ENCODE measurements at regions of chr16 and their contacts with region 1.

Region 1: GRCh38 chr16:81366316-81366932 is 51.7 kb downstream of the GAN start:
- DNase-seq: peak; percentile 36
- H3K4me3 Mint-ChIP-seq: no peak overlapping the region
- H3K27ac Mint-ChIP-seq: no peak overlapping the region
- H3K4me1 Mint-ChIP-seq: no peaks in the 10 kb centered on the region
- H3K27me3 Mint-ChIP-seq: no peaks in the 10 kb centered on the region
- CTCF ChIP-seq: peak; percentile 63

Region 2: DNA sequence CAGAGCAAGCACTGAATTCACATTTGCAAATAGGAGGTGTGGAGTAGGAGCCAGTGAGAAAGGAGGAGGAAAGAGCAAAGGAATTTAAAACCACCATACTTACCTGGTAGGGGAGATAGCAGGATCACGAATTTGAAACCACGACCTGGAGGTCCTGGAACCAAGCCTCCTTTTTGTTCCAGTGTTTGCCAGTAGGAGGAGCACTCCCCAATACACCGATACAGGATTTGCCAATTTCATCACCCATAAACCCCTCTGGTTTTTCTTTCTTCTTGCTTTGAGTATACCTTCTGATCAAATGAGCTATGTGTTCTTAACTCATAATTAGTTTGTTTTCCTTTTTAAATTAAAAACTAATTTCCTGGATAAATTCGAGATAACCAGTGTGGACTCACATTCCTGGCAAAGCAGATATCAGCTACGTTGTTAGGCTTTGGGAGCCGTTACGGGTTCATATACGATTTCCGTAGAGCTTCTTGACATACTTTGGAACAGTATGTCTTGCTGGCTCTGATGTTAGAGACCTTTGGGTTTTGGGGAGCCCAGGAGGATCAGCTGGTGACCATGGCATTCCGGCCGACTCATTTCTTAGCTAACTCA is 105.3 kb before region 1 on chr16:
- CTCF ChIA-PET with region 1: no interaction called
- intact Hi-C with region 1: loop called (anchors 10 kb)
- DNase-seq: peak; percentile 58
- H3K4me3 Mint-ChIP-seq: no peak overlapping the region
- H3K27ac Mint-ChIP-seq: no peak overlapping the region
- H3K4me1 Mint-ChIP-seq: peaks cover under 1% of the 10 kb centered on the region
- H3K27me3 Mint-ChIP-seq: no peaks in the 10 kb centered on the region
- CTCF ChIP-seq: peak; percentile 81

Region 3: GRCh38 chr16:81376880-81377279 is 10.5 kb after region 1 on chr16:
- CTCF ChIA-PET with region 1: no interaction called
- intact Hi-C with region 1: no loop called
- DNase-seq: peak; percentile 59
- H3K4me3 Mint-ChIP-seq: no peak overlapping the region
- H3K27ac Mint-ChIP-seq: no peak overlapping the region
- H3K4me1 Mint-ChIP-seq: no peaks in the 10 kb centered on the region
- H3K27me3 Mint-ChIP-seq: no peaks in the 10 kb centered on the region
- CTCF ChIP-seq: no peak

Region 4: DNA sequence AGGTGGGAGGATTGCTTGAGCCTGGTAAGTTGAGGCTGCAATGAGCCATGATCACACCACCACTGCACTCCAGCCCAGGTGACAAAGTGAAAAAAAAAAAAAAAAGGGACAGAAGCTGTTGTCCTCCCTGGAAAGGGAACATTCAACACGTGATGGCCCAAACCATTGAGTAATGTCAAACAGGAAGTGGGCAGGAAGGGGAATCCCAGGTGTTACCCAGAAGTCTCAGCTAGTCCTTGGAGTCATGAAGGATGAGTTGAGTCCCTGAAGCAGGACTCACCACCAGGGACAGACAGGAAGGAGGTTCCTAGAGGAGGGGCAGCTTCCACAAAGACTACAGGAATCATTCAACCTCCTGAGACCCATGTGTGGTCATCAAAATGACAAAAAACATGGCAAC is 58.3 kb after region 1 on chr16:
- CTCF ChIA-PET with region 1: no interaction called
- intact Hi-C with region 1: no loop called
- DNase-seq: peak; percentile 50
- H3K4me3 Mint-ChIP-seq: no peak overlapping the region
- H3K27ac Mint-ChIP-seq: peak overlapping the region; percentile 77
- H3K4me1 Mint-ChIP-seq: peaks cover 29% of the 10 kb centered on the region
- H3K27me3 Mint-ChIP-seq: no peaks in the 10 kb centered on the region
- CTCF ChIP-seq: no peak

Region 5: GRCh38 chr16:81696961-81697615 is 330.7 kb after region 1 on chr16:
- CTCF ChIA-PET with region 1: no interaction called
- intact Hi-C with region 1: loop called (anchors 1 kb)
- DNase-seq: peak; percentile 79
- H3K4me3 Mint-ChIP-seq: no peak overlapping the region
- H3K27ac Mint-ChIP-seq: no peak overlapping the region
- H3K4me1 Mint-ChIP-seq: no peaks in the 10 kb centered on the region
- H3K27me3 Mint-ChIP-seq: no peaks in the 10 kb centered on the region
- CTCF ChIP-seq: peak; percentile 63

Region 6: DNA sequence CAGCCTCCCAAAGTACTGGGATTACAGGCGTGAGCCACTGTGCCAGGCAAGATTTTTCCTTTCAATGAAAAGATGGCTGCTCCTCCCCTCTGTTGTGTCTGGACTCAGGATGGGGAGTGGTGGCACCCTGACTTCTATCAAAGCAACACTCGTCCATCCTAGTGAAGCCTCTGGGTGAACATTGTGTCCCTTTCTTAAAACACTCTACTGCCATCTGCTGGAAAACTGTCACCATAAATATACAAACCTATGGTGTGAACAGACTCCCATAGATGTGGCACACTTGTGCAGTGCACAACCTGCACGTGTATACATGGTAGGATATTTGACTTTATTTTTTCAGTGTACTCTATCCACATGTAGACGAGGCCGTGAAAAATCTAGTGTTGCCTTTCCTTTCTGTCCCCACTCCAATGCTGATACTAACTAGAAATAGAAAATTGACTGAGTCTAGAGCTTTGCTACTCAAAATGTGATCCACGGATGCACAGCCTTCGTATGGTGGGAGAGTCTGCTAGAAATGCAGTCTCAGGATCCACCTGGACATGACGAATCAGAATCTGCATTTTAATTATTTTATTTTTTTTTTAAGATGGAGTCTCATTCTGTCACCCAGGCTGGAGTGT is 356.8 kb after region 1 on chr16:
- CTCF ChIA-PET with region 1: no interaction called
- intact Hi-C with region 1: loop called (anchors 1 kb)
- DNase-seq: peak; percentile 72
- H3K4me3 Mint-ChIP-seq: no peak overlapping the region
- H3K27ac Mint-ChIP-seq: no peak overlapping the region
- H3K4me1 Mint-ChIP-seq: no peaks in the 10 kb centered on the region
- H3K27me3 Mint-ChIP-seq: no peaks in the 10 kb centered on the region
- CTCF ChIP-seq: peak; percentile 66

Region 7: GRCh38 chr16:81737885-81738786 is 371.7 kb after region 1 on chr16:
- CTCF ChIA-PET with region 1: interaction called, 3 read pairs
- intact Hi-C with region 1: loop called (anchors 1 kb)
- DNase-seq: peak; percentile 92
- H3K4me3 Mint-ChIP-seq: peak overlapping the region; percentile 53
- H3K27ac Mint-ChIP-seq: no peak overlapping the region
- H3K4me1 Mint-ChIP-seq: no peaks in the 10 kb centered on the region
- H3K27me3 Mint-ChIP-seq: peaks cover 9% of the 10 kb centered on the region
- CTCF ChIP-seq: peak; percentile 94

Region 8: GRCh38 chr16:81885976-81886586 is 519.7 kb after region 1 on chr16:
- CTCF ChIA-PET with region 1: no interaction called
- intact Hi-C with region 1: loop called (anchors 2 kb)
- DNase-seq: peak; percentile 75
- H3K4me3 Mint-ChIP-seq: no peak overlapping the region
- H3K27ac Mint-ChIP-seq: no peak overlapping the region
- H3K4me1 Mint-ChIP-seq: no peaks in the 10 kb centered on the region
- H3K27me3 Mint-ChIP-seq: peaks cover 72% of the 10 kb centered on the region
- CTCF ChIP-seq: peak; percentile 79